Activated CD8-positive, alpha-beta T cell treated with anti-CD3 and anti-CD28 coated beads for 36 hours (primary cell): ENCODE measurements at regions of chr17 and their contacts with region 1.

Region 1: GRCh38 chr17:39563476-39563875 is 44.2 kb downstream of the NEUROD2 start:
- DNase-seq: no peak
- ATAC-seq: no peak
- H3K4me3 Mint-ChIP-seq: no peak overlapping the region
- H3K27ac Mint-ChIP-seq: no peak overlapping the region
- H3K4me1 Mint-ChIP-seq: no peaks in the 10 kb centered on the region
- H3K27me3 Mint-ChIP-seq: no peaks in the 10 kb centered on the region
- CTCF ChIP-seq: no peak

Region 2: DNA sequence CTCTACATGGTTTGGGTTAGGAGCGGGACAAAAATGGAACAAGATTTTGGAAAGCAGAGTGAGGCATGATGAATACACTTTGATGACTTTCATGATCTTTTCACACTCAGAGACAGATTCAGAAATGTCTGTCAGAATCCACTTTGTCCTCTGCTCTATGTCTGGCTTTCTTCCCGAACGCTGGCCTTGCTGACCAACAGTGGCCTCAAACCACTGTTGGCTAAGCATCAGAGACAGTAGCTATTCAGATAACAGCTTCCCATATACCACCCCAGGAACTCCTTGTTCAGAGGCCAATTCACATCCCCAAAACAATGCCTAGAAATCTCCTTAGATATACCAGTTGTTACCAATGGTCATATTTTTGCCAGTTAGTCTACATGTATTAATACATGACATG is 202.9 kb before region 1 on chr17:
- CTCF ChIA-PET with region 1: no interaction called
- POLR2A ChIA-PET with region 1: no interaction called
- intact Hi-C with region 1: no loop called
- DNase-seq: no peak
- ATAC-seq: no peak
- H3K4me3 Mint-ChIP-seq: no peak overlapping the region
- H3K27ac Mint-ChIP-seq: no peak overlapping the region
- H3K4me1 Mint-ChIP-seq: peaks cover 14% of the 10 kb centered on the region
- H3K27me3 Mint-ChIP-seq: no peaks in the 10 kb centered on the region
- CTCF ChIP-seq: no peak

Region 3: DNA sequence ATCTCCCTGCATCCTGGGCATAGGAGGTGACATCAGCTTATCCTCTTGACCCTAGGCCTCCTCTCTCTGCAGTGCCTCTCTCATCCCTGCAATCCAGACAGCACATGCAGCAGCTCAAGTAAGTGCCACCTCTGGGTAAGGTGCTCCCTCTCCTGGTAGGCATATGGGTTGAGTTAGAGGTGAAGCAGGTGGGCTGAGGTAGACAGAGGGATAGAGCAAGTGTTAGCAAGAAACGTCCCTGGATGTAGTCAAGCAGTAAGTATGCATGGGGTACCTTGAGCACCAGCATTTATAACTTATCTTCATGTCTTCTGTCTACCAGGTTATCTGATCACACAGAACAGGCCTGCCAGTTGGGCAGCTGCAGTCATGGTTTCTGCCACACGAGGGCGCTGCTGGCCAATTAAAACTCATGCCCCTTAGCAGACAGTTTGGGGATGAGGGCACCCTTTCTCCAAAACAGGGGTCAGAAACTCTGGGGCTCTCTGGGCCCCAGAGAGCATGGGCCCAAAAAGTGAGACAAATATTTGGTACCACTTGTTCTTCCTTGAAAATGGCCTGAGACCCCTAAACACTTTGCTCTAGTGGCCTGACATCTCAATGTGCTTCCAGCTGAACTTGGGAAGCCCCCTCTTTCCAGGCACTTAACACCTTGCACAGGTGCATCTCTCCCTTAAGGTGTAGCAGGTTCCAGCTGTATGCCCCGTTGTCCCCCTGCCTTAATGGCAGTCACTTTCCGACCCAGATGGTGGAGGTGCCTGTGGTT is 15.6 kb before region 1 on chr17:
- CTCF ChIA-PET with region 1: interaction called, 14 read pairs
- POLR2A ChIA-PET with region 1: no interaction called
- intact Hi-C with region 1: no loop called
- DNase-seq: peak; percentile 87
- ATAC-seq: peak; percentile 87
- H3K4me3 Mint-ChIP-seq: no peak overlapping the region
- H3K27ac Mint-ChIP-seq: no peak overlapping the region
- H3K4me1 Mint-ChIP-seq: no peaks in the 10 kb centered on the region
- H3K27me3 Mint-ChIP-seq: no peaks in the 10 kb centered on the region
- CTCF ChIP-seq: peak; percentile 98

Region 4: GRCh38 chr17:39573447-39574298 is 10.2 kb after region 1 on chr17:
- CTCF ChIA-PET with region 1: interaction called, 14 read pairs
- POLR2A ChIA-PET with region 1: no interaction called
- intact Hi-C with region 1: no loop called
- DNase-seq: peak; percentile 61
- ATAC-seq: peak; percentile 83
- H3K4me3 Mint-ChIP-seq: peak overlapping the region; percentile 81
- H3K27ac Mint-ChIP-seq: no peak overlapping the region
- H3K4me1 Mint-ChIP-seq: peaks cover 3% of the 10 kb centered on the region
- H3K27me3 Mint-ChIP-seq: peaks cover 7% of the 10 kb centered on the region
- CTCF ChIP-seq: no peak

Region 5: GRCh38 chr17:39668199-39668966 is 104.9 kb after region 1 on chr17 and contains the start of gene PNMT:
- CTCF ChIA-PET with region 1: no interaction called
- POLR2A ChIA-PET with region 1: no interaction called
- intact Hi-C with region 1: no loop called
- DNase-seq: peak; percentile 82
- ATAC-seq: peak; percentile 83
- H3K4me3 Mint-ChIP-seq: peak within 1 kb of the TSS; percentile 60
- H3K27ac Mint-ChIP-seq: no peak within 1 kb of the TSS
- H3K4me1 Mint-ChIP-seq: peaks cover 10% of the 10 kb centered on the region
- H3K27me3 Mint-ChIP-seq: peaks cover 15% of the 10 kb centered on the region
- CTCF ChIP-seq: peak; percentile 76
- total RNA-seq, gene PNMT: 0.40 TPM in 1 of 2 experiments, not detected in the other